Activated CD8-positive, alpha-beta memory T cell treated with anti-CD3 and anti-CD28 coated beads, Interleukin-2, amount 10 ng/mL, durations not matched to agents 7 days and 5 days (primary cell): ENCODE measurements at regions of chr2 and their contacts with region 1.

Region 1: GRCh38 chr2:169109502-169110409 is 40.4 kb downstream of the DHRS9 start:
- DNase-seq: peak; percentile 78
- ATAC-seq: peak; percentile 40
- H3K4me3 Mint-ChIP-seq: no peak overlapping the region
- H3K27ac Mint-ChIP-seq: no peak overlapping the region
- H3K4me1 Mint-ChIP-seq: peaks cover 42% of the 10 kb centered on the region
- H3K27me3 Mint-ChIP-seq: peaks cover 9% of the 10 kb centered on the region

Region 2: DNA sequence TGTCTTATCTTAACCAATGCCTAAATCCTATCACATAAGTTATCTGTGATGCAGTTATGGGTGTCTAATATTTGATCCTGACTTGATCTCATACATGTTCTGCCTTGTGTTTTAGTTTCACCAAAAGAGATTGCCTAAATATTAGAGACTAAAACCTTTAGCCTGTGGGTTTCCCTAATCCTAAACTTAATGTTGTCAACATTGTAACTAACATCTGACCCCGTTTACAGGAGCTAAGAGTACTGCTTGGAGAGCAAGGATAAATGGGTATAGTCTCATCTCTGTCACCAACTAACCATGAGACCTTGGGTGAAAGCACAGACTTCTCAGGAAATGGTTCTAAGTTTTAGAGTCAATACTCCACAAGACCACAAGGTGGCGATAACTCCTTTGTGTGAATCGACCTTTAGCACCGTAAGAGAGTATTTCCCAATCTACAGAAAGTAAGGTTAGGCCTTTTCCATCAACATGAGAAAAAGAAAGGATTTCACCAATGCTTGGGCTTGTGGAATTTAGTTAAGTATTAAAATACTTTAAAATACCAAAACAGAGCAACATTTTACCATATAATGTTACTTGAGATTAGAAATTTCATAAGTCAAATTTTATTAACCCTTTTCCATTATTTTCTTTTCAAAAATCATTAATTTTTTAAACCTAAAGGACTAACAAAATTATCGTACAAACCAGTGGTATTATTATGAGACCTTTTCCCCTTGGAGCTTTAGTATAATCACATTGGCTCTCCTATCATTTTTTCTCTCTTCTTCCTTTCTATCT is 148.1 kb before region 1 on chr2:
- CTCF ChIA-PET with region 1: interaction called, 26 read pairs
- DNase-seq: peak; percentile 48
- ATAC-seq: peak; percentile 81
- H3K4me3 Mint-ChIP-seq: no peak overlapping the region
- H3K27ac Mint-ChIP-seq: no peak overlapping the region
- H3K4me1 Mint-ChIP-seq: peaks cover 16% of the 10 kb centered on the region
- H3K27me3 Mint-ChIP-seq: no peaks in the 10 kb centered on the region

Region 3: DNA sequence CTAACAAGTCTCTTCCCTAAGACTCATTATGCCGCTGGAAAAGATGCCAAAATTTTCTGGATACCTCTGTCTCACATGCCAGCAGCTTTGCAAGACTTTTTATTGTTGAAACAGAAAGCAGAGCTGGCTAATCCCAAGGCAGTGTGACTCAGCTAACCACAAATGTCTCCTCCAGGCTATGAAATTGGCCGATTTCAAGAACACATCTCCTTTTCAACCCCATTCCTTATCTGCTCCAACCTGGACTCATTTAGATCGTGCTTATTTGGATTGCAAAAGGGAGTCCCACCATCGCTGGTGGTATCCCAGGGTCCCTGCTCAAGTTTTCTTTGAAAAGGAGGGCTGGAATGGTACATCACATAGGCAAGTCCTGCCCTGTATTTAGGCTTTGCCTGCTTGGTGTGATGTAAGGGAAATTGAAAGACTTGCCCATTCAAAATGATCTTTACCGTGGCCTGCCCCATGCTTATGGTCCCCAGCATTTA is 14.1 kb before region 1 on chr2:
- CTCF ChIA-PET with region 1: interaction called, 20 read pairs
- DNase-seq: no peak
- ATAC-seq: peak; percentile 64
- H3K4me3 Mint-ChIP-seq: no peak overlapping the region
- H3K27ac Mint-ChIP-seq: no peak overlapping the region
- H3K4me1 Mint-ChIP-seq: peaks cover 10% of the 10 kb centered on the region
- H3K27me3 Mint-ChIP-seq: peaks cover 5% of the 10 kb centered on the region

Region 4: GRCh38 chr2:169131587-169132512 is 22.1 kb after region 1 on chr2:
- CTCF ChIA-PET with region 1: interaction called, 87 read pairs
- DNase-seq: no peak
- ATAC-seq: peak; percentile 55
- H3K4me3 Mint-ChIP-seq: no peak overlapping the region
- H3K27ac Mint-ChIP-seq: no peak overlapping the region
- H3K4me1 Mint-ChIP-seq: peaks cover 5% of the 10 kb centered on the region
- H3K27me3 Mint-ChIP-seq: no peaks in the 10 kb centered on the region

Region 5: GRCh38 chr2:169141713-169142352 is 32.1 kb after region 1 on chr2:
- CTCF ChIA-PET with region 1: interaction called, 121 read pairs
- DNase-seq: peak; percentile 64
- ATAC-seq: peak; percentile 45
- H3K4me3 Mint-ChIP-seq: no peak overlapping the region
- H3K27ac Mint-ChIP-seq: no peak overlapping the region
- H3K4me1 Mint-ChIP-seq: no peaks in the 10 kb centered on the region
- H3K27me3 Mint-ChIP-seq: no peaks in the 10 kb centered on the region

Region 6: DNA sequence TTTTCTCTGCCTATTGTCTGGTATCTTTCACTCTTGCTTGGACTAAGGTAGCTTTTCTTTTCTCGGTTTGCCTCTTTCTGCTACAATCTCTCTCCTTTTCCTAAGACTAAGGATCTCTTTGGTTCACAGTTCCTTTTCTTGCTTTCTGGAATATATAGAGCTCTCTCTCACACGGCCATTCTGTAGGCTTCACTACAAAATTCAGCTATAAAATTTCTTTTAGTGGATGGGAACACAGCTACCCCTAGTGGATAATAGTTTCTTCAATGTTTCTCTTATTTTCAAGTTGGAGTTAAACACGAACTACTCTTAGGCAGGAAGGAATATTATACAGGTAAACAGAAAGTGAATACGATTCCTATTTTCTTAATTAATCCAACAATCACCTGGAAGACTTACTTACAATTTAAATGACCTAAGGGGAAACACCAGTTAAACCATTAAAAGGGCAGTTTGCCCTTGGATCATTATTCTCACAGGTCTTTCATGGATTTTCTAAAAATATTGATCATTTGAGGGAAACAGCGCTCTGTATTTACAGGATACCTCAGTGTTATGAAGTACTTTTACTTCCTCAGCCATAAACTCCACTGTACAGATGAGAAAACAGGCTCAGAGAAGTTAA is 112.1 kb after region 1 on chr2:
- CTCF ChIA-PET with region 1: interaction called, 10 read pairs
- DNase-seq: no peak
- ATAC-seq: no peak
- H3K4me3 Mint-ChIP-seq: no peak overlapping the region
- H3K27ac Mint-ChIP-seq: no peak overlapping the region
- H3K4me1 Mint-ChIP-seq: peaks cover 5% of the 10 kb centered on the region
- H3K27me3 Mint-ChIP-seq: peaks cover 13% of the 10 kb centered on the region

Region 7: GRCh38 chr2:169397697-169398096 is 287.9 kb after region 1 on chr2:
- CTCF ChIA-PET with region 1: interaction called, 15 read pairs
- DNase-seq: no peak
- ATAC-seq: no peak
- H3K4me3 Mint-ChIP-seq: no peak overlapping the region
- H3K27ac Mint-ChIP-seq: no peak overlapping the region
- H3K4me1 Mint-ChIP-seq: peaks cover 5% of the 10 kb centered on the region
- H3K27me3 Mint-ChIP-seq: peaks cover 33% of the 10 kb centered on the region